CD8-positive, alpha-beta T cell (primary cell): ENCODE measurements at regions of chr16 and their contacts with region 1.

Region 1: DNA sequence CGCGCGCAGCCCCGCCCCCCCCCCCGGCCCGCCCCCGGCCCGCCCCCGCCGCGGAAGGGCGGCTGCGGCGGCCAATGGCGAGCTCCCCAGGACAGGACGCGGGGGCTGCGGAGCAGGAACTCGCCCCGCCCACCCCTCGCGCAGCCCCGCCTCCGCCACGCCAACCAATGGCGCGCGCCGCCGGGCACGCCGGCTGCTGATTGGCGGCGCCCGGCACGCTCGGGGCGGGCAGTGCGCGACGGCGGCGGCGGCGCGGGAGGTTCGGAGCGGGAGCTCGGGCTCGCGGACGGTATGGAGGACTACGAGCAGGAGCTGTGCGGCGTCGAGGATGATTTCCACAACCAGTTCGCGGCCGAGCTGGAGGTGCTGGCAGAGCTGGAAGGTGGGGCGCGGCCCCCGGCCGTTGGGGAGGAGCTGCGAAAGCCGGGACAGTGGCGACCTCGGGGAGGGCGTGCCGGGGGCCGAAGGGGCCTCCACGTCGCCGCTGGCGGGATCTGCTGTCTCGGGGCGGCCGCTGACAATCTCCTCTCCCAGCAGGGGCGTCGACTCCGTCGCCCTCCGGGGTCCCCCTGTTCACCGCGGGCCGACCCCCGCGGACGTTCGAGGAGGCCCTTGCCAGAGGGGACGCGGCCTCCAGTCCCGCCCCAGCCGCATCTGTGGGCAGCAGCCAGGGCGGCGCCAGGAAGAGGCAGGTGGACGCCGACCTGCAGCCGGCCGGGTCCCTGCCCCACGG is at the start of gene CHTF18:
- DNase-seq: peak; percentile 88 to 96 (median 92)
- ATAC-seq: peak; percentile 98
- H3K4me3 ChIP-seq: peak within 1 kb of the TSS; percentile 81 to 97
- H3K4me3 Mint-ChIP-seq: peak within 1 kb of the TSS; percentile 84
- H3K27ac ChIP-seq: peak within 1 kb of the TSS; percentile 10 to 53
- H3K27ac Mint-ChIP-seq: peak within 1 kb of the TSS; percentile 49
- H3K4me1 ChIP-seq: peaks cover 19% of the 10 kb centered on the region
- H3K4me1 Mint-ChIP-seq: peaks cover 7% of the 10 kb centered on the region
- H3K27me3 ChIP-seq: no peaks in the 10 kb centered on the region
- H3K27me3 Mint-ChIP-seq: no peaks in the 10 kb centered on the region
- CTCF ChIP-seq: no peak
- total RNA-seq, gene CHTF18: 34.4 to 38.4 TPM

Region 2: GRCh38 chr16:508884-509736 is 279.4 kb before region 1 on chr16:
- CTCF ChIA-PET with region 1: no interaction called
- POLR2A ChIA-PET with region 1: no interaction called
- intact Hi-C with region 1: no loop called
- DNase-seq: no peak
- ATAC-seq: no peak
- H3K4me3 ChIP-seq: no peak overlapping the region
- H3K4me3 Mint-ChIP-seq: no peak overlapping the region
- H3K27ac ChIP-seq: no peak overlapping the region
- H3K27ac Mint-ChIP-seq: no peak overlapping the region
- H3K4me1 ChIP-seq: no peaks in the 10 kb centered on the region
- H3K4me1 Mint-ChIP-seq: no peaks in the 10 kb centered on the region
- H3K27me3 ChIP-seq: no peaks in the 10 kb centered on the region
- H3K27me3 Mint-ChIP-seq: no peaks in the 10 kb centered on the region
- CTCF ChIP-seq: no peak

Region 3: DNA sequence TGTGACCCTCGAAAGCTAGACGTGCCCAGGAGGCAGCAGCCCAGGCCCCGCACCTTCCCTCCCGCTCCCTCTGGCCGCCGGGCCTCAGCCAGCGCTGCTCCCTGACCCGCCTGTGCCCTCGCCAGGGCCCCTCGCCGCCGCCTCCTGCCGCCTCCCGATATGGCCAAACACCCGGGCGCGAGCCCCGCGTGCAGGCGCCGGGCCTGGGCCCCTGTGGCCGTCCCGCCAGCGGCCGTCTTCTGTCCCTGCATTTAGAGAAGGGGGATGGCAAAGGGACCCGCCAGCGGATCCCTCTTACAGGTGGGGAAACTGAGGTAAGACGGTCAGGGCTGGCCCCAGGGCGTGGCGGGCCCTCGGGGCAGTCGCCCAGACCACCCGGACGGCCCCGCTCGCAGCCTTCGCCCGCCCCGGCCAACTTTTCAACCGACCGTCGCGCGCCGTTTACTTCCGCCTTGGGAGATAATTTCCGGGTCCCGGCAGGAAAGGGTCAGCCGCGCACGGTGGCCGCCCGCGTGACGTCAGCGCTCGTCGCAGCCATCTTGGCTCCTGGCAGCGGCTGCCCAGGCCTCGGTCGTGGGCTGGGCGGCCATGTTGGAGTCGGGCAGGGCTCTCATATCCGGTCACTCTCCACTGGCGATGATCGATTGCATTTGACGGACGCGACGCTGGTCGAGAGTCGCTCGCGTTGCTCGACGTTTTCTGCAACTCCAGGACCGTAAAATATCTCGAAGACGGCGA is 19.0 kb after region 1 on chr16:
- CTCF ChIA-PET with region 1: interaction called, 3 read pairs
- POLR2A ChIA-PET with region 1: interaction called, 3 read pairs
- intact Hi-C with region 1: loop called (anchors 1 kb)
- DNase-seq: peak; percentile 65 to 93 (median 81)
- ATAC-seq: peak; percentile 88
- H3K4me3 ChIP-seq: peak overlapping the region; percentile 53 to 88
- H3K4me3 Mint-ChIP-seq: peak overlapping the region; percentile 94
- H3K27ac ChIP-seq: peak overlapping the region; percentile 61 to 85
- H3K27ac Mint-ChIP-seq: peak overlapping the region; percentile 92
- H3K4me1 ChIP-seq: peaks cover 7% of the 10 kb centered on the region
- H3K4me1 Mint-ChIP-seq: peaks cover 15% of the 10 kb centered on the region
- H3K27me3 ChIP-seq: peaks cover 0 to under 1% of the 10 kb centered on the region in 2 experiments
- H3K27me3 Mint-ChIP-seq: peaks cover 5% of the 10 kb centered on the region
- CTCF ChIP-seq: no peak

Region 4: DNA sequence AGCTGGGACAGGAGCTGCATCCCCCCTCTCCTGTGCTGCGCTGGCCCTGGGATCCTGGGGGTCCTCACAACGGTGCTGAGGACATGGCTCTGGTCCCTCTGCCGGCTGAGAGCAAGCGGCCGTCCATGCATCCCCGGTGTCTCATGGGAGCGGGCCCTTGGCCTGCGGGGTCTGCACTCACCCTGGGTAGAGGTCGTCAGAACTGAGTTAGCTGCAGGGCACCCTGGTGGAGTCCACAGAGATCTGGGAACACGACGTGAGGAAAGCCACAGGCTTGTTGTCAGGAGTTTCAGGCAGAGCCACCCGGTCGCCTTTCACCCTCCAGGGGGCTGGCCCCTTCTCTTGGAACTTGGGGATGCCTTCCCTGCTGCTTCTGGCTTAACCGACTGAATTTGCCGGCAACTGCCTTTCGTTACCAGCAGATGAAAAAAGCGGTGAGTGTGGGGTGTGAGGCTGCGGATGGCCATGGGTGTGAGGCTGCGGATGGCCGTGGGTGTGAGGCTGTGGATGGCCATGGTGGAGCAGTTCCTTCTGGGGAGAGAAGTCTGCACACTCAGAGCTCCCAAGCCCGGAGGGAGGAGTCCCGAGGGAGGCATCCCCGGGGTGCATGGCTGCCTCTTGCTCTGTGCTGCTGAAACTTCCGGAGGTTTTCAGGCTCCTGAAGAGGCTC is 100.5 kb after region 1 on chr16:
- CTCF ChIA-PET with region 1: no interaction called
- POLR2A ChIA-PET with region 1: no interaction called
- intact Hi-C with region 1: no loop called
- DNase-seq: no peak
- ATAC-seq: no peak
- H3K4me3 ChIP-seq: no peak overlapping the region
- H3K4me3 Mint-ChIP-seq: no peak overlapping the region
- H3K27ac ChIP-seq: no peak overlapping the region
- H3K27ac Mint-ChIP-seq: no peak overlapping the region
- H3K4me1 ChIP-seq: no peaks in the 10 kb centered on the region
- H3K4me1 Mint-ChIP-seq: no peaks in the 10 kb centered on the region
- H3K27me3 ChIP-seq: no peaks in the 10 kb centered on the region
- H3K27me3 Mint-ChIP-seq: no peaks in the 10 kb centered on the region
- CTCF ChIP-seq: no peak

Region 5: GRCh38 chr16:2340564-2341455 is 1552.2 kb after region 1 on chr16 and contains the start of gene ABCA3:
- CTCF ChIA-PET with region 1: no interaction called
- POLR2A ChIA-PET with region 1: no interaction called
- intact Hi-C with region 1: no loop called
- DNase-seq: peak; percentile 87 to 98 (median 93)
- ATAC-seq: peak; percentile 89
- H3K4me3 ChIP-seq: peak within 1 kb of the TSS; percentile 59 to 62
- H3K4me3 Mint-ChIP-seq: peak within 1 kb of the TSS; percentile 85
- H3K27ac ChIP-seq: no peak within 1 kb of the TSS
- H3K27ac Mint-ChIP-seq: peak within 1 kb of the TSS; percentile 71
- H3K4me1 ChIP-seq: peaks cover 9% of the 10 kb centered on the region
- H3K4me1 Mint-ChIP-seq: peaks cover 13% of the 10 kb centered on the region
- H3K27me3 ChIP-seq: peaks cover 0 to 3% of the 10 kb centered on the region in 2 experiments
- H3K27me3 Mint-ChIP-seq: peaks cover 5% of the 10 kb centered on the region
- CTCF ChIP-seq: peak; percentile 100
- total RNA-seq, gene ABCA3: 3.7 to 4.0 TPM